Caco-2 (cell line): ENCODE measurements at regions of chr17 and their contacts with region 1.

Region 1: DNA sequence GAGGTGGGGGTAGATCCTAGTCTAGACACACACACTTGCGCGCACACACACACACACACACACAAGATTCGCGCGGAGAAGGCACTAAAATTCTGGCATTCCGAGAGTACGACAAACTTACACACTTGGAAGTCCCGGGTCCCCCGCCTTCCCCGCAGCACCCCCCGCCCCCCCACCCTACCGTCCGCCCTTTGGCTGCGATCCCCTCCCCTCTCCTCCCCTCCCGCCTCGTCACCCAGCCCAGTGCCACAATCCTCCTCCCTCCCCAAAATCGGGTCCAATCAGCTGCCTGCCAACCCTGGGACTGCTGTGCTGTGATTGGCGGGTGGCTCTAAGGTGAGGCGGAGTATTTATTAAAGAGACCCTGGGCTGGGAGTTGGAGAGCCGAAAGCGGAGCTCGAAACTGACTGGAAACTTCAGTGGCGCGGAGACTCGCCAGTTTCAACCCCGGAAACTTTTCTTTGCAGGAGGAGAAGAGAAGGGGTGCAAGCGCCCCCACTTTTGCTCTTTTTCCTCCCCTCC is at the start of gene SOX9:
- DNase-seq: peak; percentile 93 to 96
- H3K4me3 ChIP-seq: peak within 1 kb of the TSS; percentile 71
- H3K4me3 Mint-ChIP-seq: peak within 1 kb of the TSS; percentile 84
- H3K27ac Mint-ChIP-seq: peak within 1 kb of the TSS; percentile 86
- H3K4me1 ChIP-seq: peaks cover 25% of the 10 kb centered on the region
- H3K4me1 Mint-ChIP-seq: peaks cover 12% of the 10 kb centered on the region
- H3K27me3 ChIP-seq: no peaks in the 10 kb centered on the region
- H3K27me3 Mint-ChIP-seq: no peaks in the 10 kb centered on the region
- CTCF ChIP-seq: no peak
- total RNA-seq, gene SOX9: 46.2 and 51.5 TPM in 2 replicates

Region 2: DNA sequence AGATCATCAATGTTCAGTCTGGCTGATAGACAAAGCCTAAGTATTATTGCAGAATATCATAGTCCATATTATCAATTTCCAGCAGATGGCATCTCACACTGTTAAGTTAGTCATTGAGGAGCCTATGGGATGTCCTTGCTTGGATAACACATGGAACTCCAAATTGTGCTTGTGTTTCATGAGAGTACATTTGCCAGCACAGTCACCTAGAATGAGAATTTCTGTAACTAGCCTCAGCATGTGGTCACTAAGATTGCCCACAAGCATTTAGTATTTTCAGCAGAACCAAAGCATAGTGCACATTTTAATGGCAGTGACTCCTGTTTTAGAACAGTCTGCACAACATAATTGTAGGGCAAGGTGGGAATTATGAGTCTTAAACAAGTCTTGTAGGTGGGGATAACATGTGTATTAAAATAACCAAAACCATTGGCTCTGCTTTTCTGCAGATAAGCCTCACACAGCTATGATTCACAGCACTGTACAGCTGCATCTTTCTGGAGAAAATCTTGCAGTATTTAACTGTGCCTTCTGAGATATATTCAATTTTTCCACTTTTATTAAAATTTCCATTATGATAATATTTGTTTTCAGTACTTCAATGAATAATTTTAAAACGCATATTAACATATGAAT is 882.7 kb before region 1 on chr17:
- CTCF ChIA-PET with region 1: no interaction called
- POLR2A ChIA-PET with region 1: no interaction called
- intact Hi-C with region 1: loop called (anchors 2 kb)
- DNase-seq: peak in 1 of 2 experiments; percentile 11
- H3K4me3 ChIP-seq: no peak overlapping the region
- H3K4me3 Mint-ChIP-seq: no peak overlapping the region
- H3K27ac Mint-ChIP-seq: no peak overlapping the region
- H3K4me1 ChIP-seq: no peaks in the 10 kb centered on the region
- H3K4me1 Mint-ChIP-seq: no peaks in the 10 kb centered on the region
- H3K27me3 ChIP-seq: no peaks in the 10 kb centered on the region
- H3K27me3 Mint-ChIP-seq: peaks cover 2% of the 10 kb centered on the region
- CTCF ChIP-seq: peak in 1 of 2 experiments; percentile 18

Region 3: GRCh38 chr17:71870546-71870862 is 250.2 kb before region 1 on chr17:
- CTCF ChIA-PET with region 1: no interaction called
- POLR2A ChIA-PET with region 1: no interaction called
- intact Hi-C with region 1: loop called (anchors 1 kb)
- DNase-seq: no peak
- H3K4me3 ChIP-seq: no peak overlapping the region
- H3K4me3 Mint-ChIP-seq: no peak overlapping the region
- H3K27ac Mint-ChIP-seq: no peak overlapping the region
- H3K4me1 ChIP-seq: no peaks in the 10 kb centered on the region
- H3K4me1 Mint-ChIP-seq: no peaks in the 10 kb centered on the region
- H3K27me3 ChIP-seq: no peaks in the 10 kb centered on the region
- H3K27me3 Mint-ChIP-seq: peaks cover 7% of the 10 kb centered on the region
- CTCF ChIP-seq: no peak

Region 4: GRCh38 chr17:72079700-72080099 is 41.0 kb before region 1 on chr17:
- CTCF ChIA-PET with region 1: no interaction called
- POLR2A ChIA-PET with region 1: no interaction called
- intact Hi-C with region 1: no loop called
- DNase-seq: no peak
- H3K4me3 ChIP-seq: no peak overlapping the region
- H3K4me3 Mint-ChIP-seq: no peak overlapping the region
- H3K27ac Mint-ChIP-seq: no peak overlapping the region
- H3K4me1 ChIP-seq: peaks cover 4% of the 10 kb centered on the region
- H3K4me1 Mint-ChIP-seq: no peaks in the 10 kb centered on the region
- H3K27me3 ChIP-seq: no peaks in the 10 kb centered on the region
- H3K27me3 Mint-ChIP-seq: peaks cover 10% of the 10 kb centered on the region
- CTCF ChIP-seq: no peak

Region 5: GRCh38 chr17:72151565-72152391 is 31.1 kb after region 1 on chr17:
- CTCF ChIA-PET with region 1: interaction called, 10 read pairs
- POLR2A ChIA-PET with region 1: interaction called, 3 read pairs
- intact Hi-C with region 1: loop called (anchors 1 kb)
- DNase-seq: peak; percentile 84 to 93
- H3K4me3 ChIP-seq: no peak overlapping the region
- H3K4me3 Mint-ChIP-seq: peak overlapping the region; percentile 45
- H3K27ac Mint-ChIP-seq: peak overlapping the region; percentile 87
- H3K4me1 ChIP-seq: peaks cover 27% of the 10 kb centered on the region
- H3K4me1 Mint-ChIP-seq: peaks cover 26% of the 10 kb centered on the region
- H3K27me3 ChIP-seq: no peaks in the 10 kb centered on the region
- H3K27me3 Mint-ChIP-seq: no peaks in the 10 kb centered on the region
- CTCF ChIP-seq: no peak

Region 6: GRCh38 chr17:72404872-72405271 is 284.2 kb after region 1 on chr17:
- CTCF ChIA-PET with region 1: no interaction called
- POLR2A ChIA-PET with region 1: interaction called, 10 read pairs
- intact Hi-C with region 1: loop called (anchors 5 kb)
- DNase-seq: no peak
- H3K4me3 ChIP-seq: no peak overlapping the region
- H3K4me3 Mint-ChIP-seq: no peak overlapping the region
- H3K27ac Mint-ChIP-seq: peak overlapping the region; percentile 97
- H3K4me1 ChIP-seq: peaks cover 93% of the 10 kb centered on the region
- H3K4me1 Mint-ChIP-seq: peaks cover 60% of the 10 kb centered on the region
- H3K27me3 ChIP-seq: no peaks in the 10 kb centered on the region
- H3K27me3 Mint-ChIP-seq: no peaks in the 10 kb centered on the region
- CTCF ChIP-seq: no peak

Region 7: DNA sequence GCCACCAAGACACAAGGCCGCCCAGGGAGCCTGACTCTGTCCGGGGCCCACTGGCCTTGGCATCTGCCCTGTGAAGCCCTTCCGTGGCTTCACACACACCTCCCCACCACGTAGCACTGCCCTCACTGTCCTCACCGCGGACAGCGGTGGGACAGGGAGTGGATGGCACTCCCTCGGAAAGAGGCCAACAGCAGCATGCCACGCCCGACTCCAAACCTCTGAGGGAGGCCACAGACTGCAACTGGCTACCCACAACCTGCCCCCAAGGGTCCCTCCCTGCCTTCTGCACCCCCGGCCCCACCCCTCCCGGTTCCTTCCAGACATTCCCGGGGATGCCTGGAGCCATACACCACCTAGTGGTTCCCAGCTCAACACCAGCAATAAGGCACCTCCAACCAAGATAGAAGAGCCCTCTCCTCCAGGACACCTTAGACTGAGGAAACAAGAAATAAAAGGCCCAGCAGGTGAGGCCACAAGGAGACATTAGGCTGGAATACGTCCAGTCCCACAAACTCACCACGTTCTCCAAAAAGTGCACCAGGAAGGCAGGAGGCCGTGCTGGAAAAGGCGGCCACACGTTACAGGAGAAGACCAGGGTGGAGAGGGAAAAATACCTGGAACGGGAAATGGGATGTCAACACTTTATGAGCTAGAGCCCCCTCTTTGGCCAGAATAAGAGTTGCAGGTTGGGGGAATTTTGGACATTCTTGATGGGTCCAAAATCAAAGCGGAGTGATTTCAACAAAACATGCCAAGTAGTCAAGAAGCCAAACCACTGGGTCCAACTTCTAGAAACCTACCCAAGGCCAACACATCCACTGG is 310.1 kb after region 1 on chr17:
- CTCF ChIA-PET with region 1: no interaction called
- POLR2A ChIA-PET with region 1: no interaction called
- intact Hi-C with region 1: loop called (anchors 5 kb)
- DNase-seq: peak in 1 of 2 experiments; percentile 47
- H3K4me3 ChIP-seq: no peak overlapping the region
- H3K4me3 Mint-ChIP-seq: no peak overlapping the region
- H3K27ac Mint-ChIP-seq: peak overlapping the region; percentile 47
- H3K4me1 ChIP-seq: peaks cover 52% of the 10 kb centered on the region
- H3K4me1 Mint-ChIP-seq: peaks cover 52% of the 10 kb centered on the region
- H3K27me3 ChIP-seq: no peaks in the 10 kb centered on the region
- H3K27me3 Mint-ChIP-seq: no peaks in the 10 kb centered on the region
- CTCF ChIP-seq: peak; percentile 3 to 35

Region 8: DNA sequence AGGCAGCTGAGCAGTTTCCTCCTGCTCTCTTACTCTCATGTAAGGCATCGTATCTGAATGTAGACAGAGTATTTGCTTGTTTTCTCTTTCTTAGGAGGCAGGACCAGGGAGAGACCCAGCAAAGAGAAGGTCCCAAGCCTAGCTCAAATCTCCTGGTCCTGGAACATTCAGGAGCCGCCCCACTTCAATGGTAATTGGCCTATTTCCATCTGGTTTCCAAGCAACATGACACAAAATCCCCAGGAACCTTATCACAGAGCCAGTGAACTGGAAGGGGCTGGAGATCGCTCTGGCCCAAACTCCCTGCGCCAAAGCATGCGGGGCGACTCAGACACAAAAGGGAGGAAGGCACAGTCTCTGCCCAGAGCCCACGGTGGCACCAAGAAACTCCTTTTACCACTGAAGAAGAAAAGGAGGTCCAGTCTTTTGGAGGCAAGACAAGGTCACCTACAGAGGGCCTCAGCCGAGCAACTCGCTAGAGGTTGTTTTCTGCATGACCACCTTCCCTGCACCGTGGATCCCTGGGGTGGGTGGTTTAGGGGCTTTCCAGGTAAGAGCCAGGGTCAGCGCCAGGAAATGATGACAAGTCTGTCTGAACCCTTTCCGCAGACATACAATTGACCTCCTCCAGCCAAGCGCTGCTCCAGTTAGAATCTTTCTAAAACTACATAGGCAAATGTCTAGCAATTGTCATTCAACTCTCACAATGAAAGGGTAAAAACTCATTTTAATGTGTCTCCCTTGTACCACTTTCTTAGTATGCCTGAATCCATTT is 394.8 kb after region 1 on chr17:
- CTCF ChIA-PET with region 1: interaction called, 3 read pairs
- POLR2A ChIA-PET with region 1: interaction called, 9 read pairs
- intact Hi-C with region 1: loop called (anchors 5 kb)
- DNase-seq: no peak
- H3K4me3 ChIP-seq: no peak overlapping the region
- H3K4me3 Mint-ChIP-seq: no peak overlapping the region
- H3K27ac Mint-ChIP-seq: no peak overlapping the region
- H3K4me1 ChIP-seq: peaks cover 46% of the 10 kb centered on the region
- H3K4me1 Mint-ChIP-seq: peaks cover 27% of the 10 kb centered on the region
- H3K27me3 ChIP-seq: no peaks in the 10 kb centered on the region
- H3K27me3 Mint-ChIP-seq: no peaks in the 10 kb centered on the region
- CTCF ChIP-seq: no peak